ENCODE measurements at regions of chr14 and their contacts with region 1.

Region 1: DNA sequence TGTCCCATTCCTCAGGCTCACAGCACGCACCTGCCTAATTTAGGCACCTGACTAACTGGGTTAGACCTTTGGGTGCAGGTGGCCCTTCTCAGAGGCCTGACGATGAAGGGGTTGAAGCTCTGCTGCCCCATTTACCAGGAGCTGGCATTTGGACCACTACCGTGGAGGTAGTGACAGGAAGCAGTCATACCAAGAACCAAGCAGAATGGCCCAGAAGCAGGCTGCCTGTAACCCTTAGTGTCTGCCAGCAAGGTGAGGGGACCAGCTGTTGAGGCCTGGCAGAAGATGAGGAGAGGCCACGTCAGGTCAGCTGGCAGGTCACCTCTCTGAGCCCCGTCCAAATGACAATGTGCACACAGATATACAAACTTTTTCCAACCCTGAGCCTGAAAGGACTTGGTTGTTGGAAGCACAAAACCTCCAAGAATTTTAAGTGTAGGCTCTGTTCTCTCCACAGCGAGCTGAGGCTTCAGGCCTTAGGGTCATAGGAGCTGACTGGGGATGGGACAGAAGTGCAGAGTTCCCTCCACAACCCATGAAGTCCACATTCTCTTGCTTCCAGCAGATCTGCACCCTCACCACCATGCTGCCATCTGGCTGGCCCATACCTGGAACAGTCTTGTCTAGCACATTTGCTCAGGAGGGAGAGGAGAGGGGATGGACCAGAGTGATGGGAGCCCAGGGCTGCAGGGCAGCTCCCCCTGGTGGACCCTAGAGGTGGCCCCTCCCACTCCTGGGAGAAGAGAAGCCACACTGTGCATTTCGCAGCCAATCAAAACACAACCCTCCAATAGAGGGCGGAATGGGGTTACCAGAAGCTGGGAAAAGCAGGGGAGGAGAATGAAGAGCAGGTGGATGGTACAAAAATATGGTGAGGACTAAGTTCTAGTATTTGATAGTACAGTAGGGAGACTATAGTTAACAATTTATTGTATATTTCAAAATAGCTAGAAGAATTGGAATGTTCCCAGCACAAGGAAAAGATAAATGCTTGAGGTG is 23.3 kb downstream of the VASH1 start:
- DNase-seq: peak; percentile 86
- ATAC-seq: peak; percentile 85 to 89

Region 2: GRCh38 chr14:76710056-76711010 is 74.2 kb before region 1 on chr14:
- intact Hi-C with region 1: loop called (anchors 1 to 5 kb)
- DNase-seq: no peak
- ATAC-seq: peak; percentile 64 to 70

Region 3: DNA sequence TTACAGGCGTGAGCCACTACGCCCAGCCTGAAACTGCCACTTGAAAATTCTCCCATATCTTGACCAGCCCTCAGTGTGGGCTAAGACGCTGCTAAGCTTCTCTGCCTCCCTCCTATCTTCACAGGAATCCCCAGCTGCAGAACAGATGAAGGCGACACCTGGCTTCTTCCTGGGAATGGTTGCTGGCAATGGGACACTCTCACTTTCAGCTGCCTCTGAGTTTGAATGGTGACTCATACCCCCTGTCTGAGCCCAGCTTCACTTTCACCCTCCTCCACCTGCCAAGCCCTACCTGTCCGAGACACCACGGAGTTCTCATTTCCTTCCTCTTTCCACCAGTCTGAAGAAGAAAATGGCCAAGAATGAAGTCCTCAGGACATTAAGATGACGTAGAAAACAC is 41.6 kb before region 1 on chr14:
- intact Hi-C with region 1: no loop called
- DNase-seq: no peak
- ATAC-seq: peak in 1 of 2 donors; percentile 72